CD4-positive, alpha-beta T cell (primary cell): ENCODE measurements at regions of chr14 and their contacts with region 1.

Region 1: DNA sequence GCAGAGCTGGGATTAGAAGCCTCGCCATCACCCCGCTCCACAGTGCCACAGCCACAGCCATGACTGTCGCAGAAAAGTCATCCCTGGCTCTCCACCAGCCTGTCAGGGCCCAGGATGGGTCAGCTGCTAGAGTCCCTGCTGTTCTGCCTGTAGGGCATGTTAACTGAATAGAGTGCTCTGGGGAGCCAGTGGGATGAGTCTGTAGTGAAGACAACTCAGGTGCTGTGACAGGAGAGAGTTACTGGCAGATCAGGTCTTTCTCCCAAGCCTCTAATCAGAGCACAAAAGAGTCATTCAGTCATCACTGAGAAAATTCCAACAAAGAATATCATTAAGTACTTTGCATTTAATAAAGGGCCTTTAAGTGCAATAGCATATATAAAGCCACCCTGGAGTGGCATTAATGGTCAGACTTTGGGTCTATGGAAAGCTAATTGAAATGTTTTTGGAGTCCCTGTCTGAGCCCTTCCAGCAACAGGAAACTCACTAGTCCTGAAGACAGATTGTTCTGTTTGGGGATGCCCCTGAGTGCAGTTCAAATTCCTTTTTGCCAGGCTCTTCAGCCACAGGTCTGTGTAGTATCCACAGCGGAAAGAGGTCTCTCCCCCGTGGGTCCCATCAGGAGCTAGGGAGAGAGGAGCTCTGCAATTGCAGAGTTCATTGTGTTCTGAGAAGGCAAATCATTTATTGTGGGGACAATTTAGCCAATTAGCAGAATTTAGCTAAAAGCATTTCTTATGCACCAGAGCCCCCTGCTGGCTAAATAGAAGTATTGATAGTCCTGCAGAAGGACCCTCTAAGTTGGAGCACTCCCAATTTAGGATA is 45.2 kb upstream of the C14orf132 start:
- DNase-seq: peak in 6 of 14 experiments; percentile 4 to 60 (median 36)
- ATAC-seq: no peak
- H3K4me3 ChIP-seq: no peak overlapping the region
- H3K4me3 Mint-ChIP-seq: no peak overlapping the region
- H3K27ac ChIP-seq: no peak overlapping the region
- H3K27ac Mint-ChIP-seq: no peak overlapping the region
- H3K4me1 ChIP-seq: no peaks in the 10 kb centered on the region
- H3K4me1 Mint-ChIP-seq: no peaks in the 10 kb centered on the region
- H3K27me3 ChIP-seq: peaks cover 6 to 23% of the 10 kb centered on the region in 2 experiments
- H3K27me3 Mint-ChIP-seq: peaks cover 66% of the 10 kb centered on the region
- CTCF ChIP-seq: peak; percentile 89

Region 2: GRCh38 chr14:94689218-94689984 is 1304.6 kb before region 1 on chr14:
- CTCF ChIA-PET with region 1: no interaction called
- POLR2A ChIA-PET with region 1: no interaction called
- intact Hi-C with region 1: loop called (anchors 5 to 10 kb)
- DNase-seq: peak in 13 of 14 experiments; percentile 4 to 58 (median 25)
- ATAC-seq: no peak
- H3K4me3 ChIP-seq: no peak overlapping the region
- H3K4me3 Mint-ChIP-seq: no peak overlapping the region
- H3K27ac ChIP-seq: no peak overlapping the region
- H3K27ac Mint-ChIP-seq: no peak overlapping the region
- H3K4me1 ChIP-seq: peaks cover 7% of the 10 kb centered on the region
- H3K4me1 Mint-ChIP-seq: no peaks in the 10 kb centered on the region
- H3K27me3 ChIP-seq: peaks cover 5 to 13% of the 10 kb centered on the region in 2 experiments
- H3K27me3 Mint-ChIP-seq: peaks cover 11% of the 10 kb centered on the region
- CTCF ChIP-seq: peak; percentile 69

Region 3: GRCh38 chr14:95561001-95561412 is 433.0 kb before region 1 on chr14:
- CTCF ChIA-PET with region 1: no interaction called
- POLR2A ChIA-PET with region 1: no interaction called
- intact Hi-C with region 1: loop called (anchors 1 kb)
- DNase-seq: peak; percentile 73 to 90 (median 80)
- ATAC-seq: peak; percentile 99
- H3K4me3 ChIP-seq: no peak overlapping the region
- H3K4me3 Mint-ChIP-seq: no peak overlapping the region
- H3K27ac ChIP-seq: no peak overlapping the region
- H3K27ac Mint-ChIP-seq: no peak overlapping the region
- H3K4me1 ChIP-seq: peaks cover 4% of the 10 kb centered on the region
- H3K4me1 Mint-ChIP-seq: peaks cover 5% of the 10 kb centered on the region
- H3K27me3 ChIP-seq: peaks cover 0 to 4% of the 10 kb centered on the region in 2 experiments
- H3K27me3 Mint-ChIP-seq: peaks cover 14% of the 10 kb centered on the region
- CTCF ChIP-seq: peak; percentile 99

Region 4: GRCh38 chr14:95972164-95972563 is 21.8 kb before region 1 on chr14:
- CTCF ChIA-PET with region 1: no interaction called
- POLR2A ChIA-PET with region 1: no interaction called
- intact Hi-C with region 1: no loop called
- DNase-seq: no peak
- ATAC-seq: no peak
- H3K4me3 ChIP-seq: no peak overlapping the region
- H3K4me3 Mint-ChIP-seq: no peak overlapping the region
- H3K27ac ChIP-seq: no peak overlapping the region
- H3K27ac Mint-ChIP-seq: no peak overlapping the region
- H3K4me1 ChIP-seq: no peaks in the 10 kb centered on the region
- H3K4me1 Mint-ChIP-seq: no peaks in the 10 kb centered on the region
- H3K27me3 ChIP-seq: peaks cover 4 to 6% of the 10 kb centered on the region in 2 experiments
- H3K27me3 Mint-ChIP-seq: peaks cover 23% of the 10 kb centered on the region
- CTCF ChIP-seq: no peak

Region 5: GRCh38 chr14:96053600-96054381 is 59.8 kb after region 1 on chr14:
- CTCF ChIA-PET with region 1: no interaction called
- POLR2A ChIA-PET with region 1: no interaction called
- intact Hi-C with region 1: loop called (anchors 2 kb)
- DNase-seq: no peak
- ATAC-seq: no peak
- H3K4me3 ChIP-seq: no peak overlapping the region
- H3K4me3 Mint-ChIP-seq: no peak overlapping the region
- H3K27ac ChIP-seq: no peak overlapping the region
- H3K27ac Mint-ChIP-seq: no peak overlapping the region
- H3K4me1 ChIP-seq: no peaks in the 10 kb centered on the region
- H3K4me1 Mint-ChIP-seq: peaks cover 5% of the 10 kb centered on the region
- H3K27me3 ChIP-seq: peaks cover 3 to 4% of the 10 kb centered on the region in 2 experiments
- H3K27me3 Mint-ChIP-seq: peaks cover 18% of the 10 kb centered on the region
- CTCF ChIP-seq: no peak

Region 6: GRCh38 chr14:96275177-96276112 is 281.5 kb after region 1 on chr14:
- CTCF ChIA-PET with region 1: no interaction called
- POLR2A ChIA-PET with region 1: no interaction called
- intact Hi-C with region 1: loop called (anchors 2 to 5 kb)
- DNase-seq: peak; percentile 47 to 84 (median 66)
- ATAC-seq: no peak
- H3K4me3 ChIP-seq: no peak overlapping the region
- H3K4me3 Mint-ChIP-seq: no peak overlapping the region
- H3K27ac ChIP-seq: no peak overlapping the region
- H3K27ac Mint-ChIP-seq: no peak overlapping the region
- H3K4me1 ChIP-seq: peaks cover 3% of the 10 kb centered on the region
- H3K4me1 Mint-ChIP-seq: no peaks in the 10 kb centered on the region
- H3K27me3 ChIP-seq: no peaks in the 10 kb centered on the region
- H3K27me3 Mint-ChIP-seq: no peaks in the 10 kb centered on the region
- CTCF ChIP-seq: peak; percentile 83